Transverse colon (tissue), 4 donors: ENCODE measurements at regions of chr1 and their contacts with region 1.

Region 1: DNA sequence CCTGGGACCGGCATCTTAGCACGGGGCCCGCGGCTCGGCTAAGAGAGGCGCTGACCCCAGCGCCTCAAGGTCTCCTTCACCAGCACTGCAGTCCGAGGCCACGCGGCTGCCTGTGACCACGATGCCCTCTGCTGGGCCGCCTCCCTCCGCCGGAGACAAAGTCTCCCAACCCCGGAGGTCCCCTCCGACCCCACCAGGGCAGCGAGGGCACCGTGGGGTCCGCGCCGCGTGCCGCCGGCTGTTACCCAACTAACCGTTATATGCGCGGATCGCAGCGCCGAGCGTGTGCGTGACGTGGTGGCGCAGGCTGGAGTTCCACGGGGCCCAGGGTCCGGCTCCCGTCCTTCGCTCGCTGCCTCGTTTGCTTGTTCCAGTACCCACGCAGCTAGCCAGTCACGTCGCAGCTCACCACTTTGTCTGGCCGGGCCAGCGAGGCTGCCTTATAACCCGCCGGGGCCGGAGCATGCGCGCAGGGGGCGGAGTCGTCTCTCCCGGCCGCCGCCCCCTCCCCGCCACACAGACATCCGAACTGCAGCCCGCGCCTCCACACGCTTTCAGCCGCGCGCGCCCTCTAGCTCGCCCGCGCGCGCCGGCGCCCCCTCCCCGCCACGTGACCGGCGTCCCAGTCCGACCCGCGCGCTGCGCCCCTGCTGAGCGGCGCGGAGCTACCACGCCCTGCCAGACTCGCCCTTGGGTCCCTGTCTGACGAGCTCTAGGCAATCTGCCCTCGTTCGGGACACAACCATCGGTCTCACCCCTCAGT is at the start of gene SLC16A1:
- DNase-seq: peak; percentile 94
- H3K4me3 ChIP-seq: peak within 1 kb of the TSS; percentile 42 to 80 (median 64)
- H3K27ac ChIP-seq: peak within 1 kb of the TSS; percentile 87 to 95 (median 91)
- H3K4me1 ChIP-seq: peaks cover 5 to 47% (median 26%) of the 10 kb centered on the region in 4 donors
- H3K27me3 ChIP-seq: no peaks in the 10 kb centered on the region
- CTCF ChIP-seq: peak in 1 of 5 experiments; percentile 10
- EP300 ChIP-seq: no peak
- POLR2A ChIP-seq: peak; percentile 91
- total RNA-seq, gene SLC16A1: 21.5 to 177 (median 109) TPM

Region 2: DNA sequence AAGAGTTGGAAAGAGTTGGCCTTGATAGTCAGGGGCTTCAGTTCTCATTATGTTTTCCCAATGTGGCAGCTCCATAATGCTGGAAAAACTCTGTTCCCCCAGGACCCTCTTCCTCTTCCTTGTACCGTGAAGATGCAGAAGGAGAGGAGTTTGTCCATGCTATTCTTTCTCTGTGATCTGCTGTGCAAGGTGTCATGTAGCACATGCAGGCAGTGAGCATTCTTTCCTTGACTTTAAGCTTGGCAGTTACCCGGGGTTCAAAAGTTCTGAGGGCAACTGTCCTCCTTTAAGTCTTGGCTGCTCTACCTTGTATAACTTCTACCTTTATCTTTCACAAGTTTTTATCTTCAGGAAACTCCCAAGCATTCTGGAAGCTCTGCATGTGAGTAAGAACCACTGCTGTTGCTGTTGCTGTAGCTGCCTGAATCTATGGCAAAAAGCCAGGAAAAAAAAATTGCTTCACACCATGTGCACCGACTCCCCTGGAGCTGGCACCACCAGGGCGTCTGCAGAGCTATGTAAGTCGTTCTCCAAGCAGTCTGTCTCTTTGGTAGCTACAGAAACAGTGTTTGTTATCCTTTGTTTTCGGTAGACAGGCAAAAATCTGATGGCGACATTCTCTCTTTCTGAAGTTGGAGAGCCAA is 42.8 kb after region 1 on chr1:
- in situ Hi-C with region 1: no loop called
- intact Hi-C with region 1: loop called (anchors 5 kb)
- DNase-seq: no peak
- H3K4me3 ChIP-seq: no peak overlapping the region
- H3K27ac ChIP-seq: peak overlapping the region; percentile 65 to 80 (median 76)
- H3K4me1 ChIP-seq: peaks cover 0 to 10% (median 1%) of the 10 kb centered on the region in 4 donors
- H3K27me3 ChIP-seq: no peaks in the 10 kb centered on the region
- CTCF ChIP-seq: no peak
- EP300 ChIP-seq: no peak
- POLR2A ChIP-seq: no peak

Region 3: DNA sequence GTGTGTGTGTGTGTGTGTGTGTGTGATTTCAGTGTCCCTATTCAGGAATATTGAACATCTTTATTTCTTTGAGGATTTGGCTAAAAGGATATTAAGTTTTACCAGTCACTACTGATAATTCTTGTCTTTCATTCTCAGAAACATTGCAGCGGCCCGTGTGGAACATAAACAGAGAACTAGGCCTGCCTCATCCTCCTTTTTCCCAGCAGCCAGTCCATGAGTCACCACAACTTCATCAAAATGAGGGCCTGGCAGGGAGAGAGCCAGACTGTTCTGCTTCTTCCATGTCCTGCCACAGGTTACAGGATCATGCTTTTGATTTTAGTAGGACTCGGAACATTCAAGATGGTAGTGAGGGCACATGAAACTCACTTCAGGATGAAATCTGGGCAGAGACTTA is 167.8 kb after region 1 on chr1:
- in situ Hi-C with region 1: no loop called
- intact Hi-C with region 1: no loop called
- DNase-seq: no peak
- H3K4me3 ChIP-seq: no peak overlapping the region
- H3K27ac ChIP-seq: peak overlapping the region in 3 of 4 donors; percentile 9 to 48 (median 26)
- H3K4me1 ChIP-seq: peaks cover 0 to 10% (median 0%) of the 10 kb centered on the region in 4 donors
- H3K27me3 ChIP-seq: no peaks in the 10 kb centered on the region
- CTCF ChIP-seq: no peak
- EP300 ChIP-seq: no peak
- POLR2A ChIP-seq: no peak

Region 4: DNA sequence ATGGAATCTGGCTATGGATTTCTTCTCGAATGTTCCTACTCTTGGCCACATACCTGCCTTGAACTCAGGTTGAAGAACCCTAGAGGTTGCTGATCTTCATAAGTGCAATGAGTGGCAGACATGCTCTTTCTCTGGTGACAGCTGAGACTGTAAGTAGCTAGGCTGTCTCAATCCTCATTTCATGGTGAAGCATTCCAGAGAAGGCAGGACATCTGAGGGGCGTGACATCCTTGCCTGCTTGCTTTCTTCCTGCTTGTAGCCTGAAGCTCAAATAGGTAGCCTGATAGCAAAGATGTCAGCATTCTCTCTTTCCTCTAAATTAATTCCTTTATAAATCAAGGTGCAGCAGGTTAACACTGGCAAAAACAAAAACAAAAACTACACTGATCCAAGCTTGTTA is 319.7 kb after region 1 on chr1:
- in situ Hi-C with region 1: no loop called
- intact Hi-C with region 1: no loop called
- DNase-seq: no peak
- H3K4me3 ChIP-seq: no peak overlapping the region
- H3K27ac ChIP-seq: no peak overlapping the region
- H3K4me1 ChIP-seq: peaks cover 0 to 17% (median 2%) of the 10 kb centered on the region in 4 donors
- H3K27me3 ChIP-seq: no peaks in the 10 kb centered on the region
- CTCF ChIP-seq: no peak
- EP300 ChIP-seq: no peak
- POLR2A ChIP-seq: no peak